Dorsolateral prefrontal cortex (tissue), 120 donors: ENCODE measurements at regions of chr6 and their contacts with region 1.

Region 1: DNA sequence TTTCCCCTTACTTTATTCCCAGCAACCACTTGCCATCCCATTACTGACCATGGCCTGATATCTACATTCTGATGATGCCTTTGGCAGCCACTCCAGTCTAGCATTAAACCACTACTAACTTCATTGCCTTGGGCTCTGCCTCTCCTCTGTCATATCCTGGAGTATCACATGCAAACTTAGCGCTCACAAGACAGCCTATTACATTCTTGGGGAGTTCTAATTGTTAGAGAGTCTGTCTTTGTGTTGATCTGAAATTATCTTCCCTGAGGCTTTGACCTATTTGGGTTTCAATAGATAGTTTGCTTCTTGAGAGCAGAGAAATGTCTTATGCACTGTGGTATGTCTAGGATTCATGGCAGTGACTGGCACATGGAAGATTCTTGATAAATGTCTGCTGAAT is 40.5 kb upstream of the RAB32 start:
- DNase-seq: no peak
- H3K4me3 ChIP-seq: no peak overlapping the region
- H3K27ac ChIP-seq: peak overlapping the region in 1 of 59 donors; percentile 15
- H3K27me3 ChIP-seq: no peaks in the 10 kb centered on the region
- CTCF ChIP-seq: no peak

Region 2: GRCh38 chr6:146028293-146028691 is 474.8 kb before region 1 on chr6:
- intact Hi-C with region 1: loop called in 1 of 2 experiments (anchors 5 kb)
- DNase-seq: peak in 6 of 10 donors; percentile 12 to 69 (median 46)
- H3K4me3 ChIP-seq: peak overlapping the region; percentile 16 to 67 (median 51)
- H3K27ac ChIP-seq: peak overlapping the region in 6 of 59 donors; percentile 17 to 80 (median 52)
- H3K27me3 ChIP-seq: peaks cover 0 to 40% (median 12%) of the 10 kb centered on the region in 45 donors
- CTCF ChIP-seq: no peak

Region 3: DNA sequence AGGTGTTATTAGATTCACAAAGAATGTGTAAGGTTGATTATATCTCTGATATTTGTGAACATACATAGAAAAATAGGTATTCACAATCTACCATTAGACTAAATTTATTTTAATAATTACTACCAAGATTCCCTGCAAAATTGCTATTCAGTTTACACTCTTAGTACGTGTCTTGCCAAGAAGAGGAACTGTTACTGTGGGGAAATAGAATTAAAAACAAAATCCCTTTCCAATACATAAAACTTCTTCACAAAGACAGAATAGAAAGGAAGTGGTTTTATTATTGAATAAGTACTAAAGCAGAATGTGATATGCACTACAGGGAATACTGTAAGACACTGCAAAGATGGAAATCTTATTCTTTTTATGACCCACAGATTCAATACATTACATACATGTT is 57.5 kb after region 1 on chr6:
- intact Hi-C with region 1: no loop called
- DNase-seq: no peak
- H3K4me3 ChIP-seq: no peak overlapping the region
- H3K27ac ChIP-seq: no peak overlapping the region
- H3K27me3 ChIP-seq: no peaks in the 10 kb centered on the region
- CTCF ChIP-seq: no peak